Activated CD4-positive, alpha-beta T cell treated with anti-CD3 and anti-CD28 coated beads, Interleukin-2, amount 10 ng/mL, durations not matched to agents 24 days and 14 days (primary cell): ENCODE measurements at regions of chr19 and their contacts with region 1.

Region 1: GRCh38 chr19:16659831-16660708 is at the start of gene SMIM7:
- DNase-seq: peak; percentile 99
- H3K4me3 Mint-ChIP-seq: peak within 1 kb of the TSS; percentile 98
- H3K27ac Mint-ChIP-seq: peak within 1 kb of the TSS; percentile 97
- H3K4me1 Mint-ChIP-seq: peaks cover 18% of the 10 kb centered on the region
- H3K27me3 Mint-ChIP-seq: peaks cover 23% of the 10 kb centered on the region
- total RNA-seq, gene SMIM7: 66.1 and 69.9 TPM in 2 replicates

Region 2: GRCh38 chr19:16136185-16136999 is 523.7 kb before region 1 on chr19:
- intact Hi-C with region 1: no loop called
- DNase-seq: no peak
- H3K4me3 Mint-ChIP-seq: no peak overlapping the region
- H3K27ac Mint-ChIP-seq: no peak overlapping the region
- H3K4me1 Mint-ChIP-seq: peaks cover 11% of the 10 kb centered on the region
- H3K27me3 Mint-ChIP-seq: no peaks in the 10 kb centered on the region

Region 3: GRCh38 chr19:16572332-16573211 is 87.5 kb before region 1 on chr19 and contains the start of gene SLC35E1:
- intact Hi-C with region 1: loop called (anchors 5 kb)
- DNase-seq: peak; percentile 98
- H3K4me3 Mint-ChIP-seq: peak within 1 kb of the TSS; percentile 93
- H3K27ac Mint-ChIP-seq: peak within 1 kb of the TSS; percentile 88
- H3K4me1 Mint-ChIP-seq: peaks cover 39% of the 10 kb centered on the region
- H3K27me3 Mint-ChIP-seq: no peaks in the 10 kb centered on the region
- total RNA-seq, gene SLC35E1: 60.2 and 65.0 TPM in 2 replicates